ENCODE measurements at regions of chr5 and their contacts with region 1.

Region 1: DNA sequence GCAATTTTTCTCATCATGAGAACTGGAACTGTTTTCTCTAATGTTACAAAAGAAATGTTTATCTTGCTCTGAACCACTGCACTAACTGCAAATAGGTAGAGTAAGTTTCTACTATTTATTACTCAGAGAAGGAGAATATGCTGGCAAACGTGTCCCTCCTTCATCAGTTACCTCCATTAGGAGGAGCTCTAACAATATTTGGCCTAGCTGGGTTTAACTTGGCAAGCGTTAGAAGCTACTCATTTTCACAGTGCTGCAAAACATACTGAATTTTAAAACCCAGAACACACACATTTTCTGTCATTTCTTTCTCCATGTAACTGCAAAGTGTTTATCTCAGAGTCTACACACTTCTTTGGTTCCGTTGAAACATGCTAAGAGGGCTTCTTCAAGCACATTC is 101.0 kb upstream of the GABRG2 start:
- DNase-seq: peak in 1 of 2 experiments; percentile 11
- H3K4me3 ChIP-seq: no peak overlapping the region
- H3K4me3 Mint-ChIP-seq: no peak overlapping the region
- H3K27ac Mint-ChIP-seq: no peak overlapping the region
- H3K4me1 ChIP-seq: no peaks in the 10 kb centered on the region
- H3K4me1 Mint-ChIP-seq: no peaks in the 10 kb centered on the region
- H3K27me3 ChIP-seq: no peaks in the 10 kb centered on the region
- H3K27me3 Mint-ChIP-seq: no peaks in the 10 kb centered on the region
- CTCF ChIP-seq: peak; percentile 21 to 59

Region 2: DNA sequence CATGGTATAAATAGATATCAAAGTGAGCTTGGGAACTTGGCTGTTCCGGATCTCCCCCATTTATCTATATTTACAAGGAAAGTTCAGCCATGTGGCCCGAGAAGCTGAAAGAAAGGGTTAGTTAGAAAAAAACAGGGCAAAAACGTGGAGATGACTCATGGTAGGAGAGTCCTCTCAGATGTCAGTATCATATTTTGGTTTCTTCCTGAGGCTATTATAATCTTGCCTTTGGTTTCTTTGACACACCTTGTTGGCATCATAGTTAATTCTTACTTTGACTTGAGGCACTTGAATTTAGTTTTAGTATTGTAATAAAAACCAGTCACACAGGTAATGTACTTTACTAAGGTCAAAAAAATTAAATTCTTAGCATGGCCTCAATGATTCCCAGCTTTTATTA is 221.2 kb before region 1 on chr5:
- CTCF ChIA-PET with region 1: no interaction called
- POLR2A ChIA-PET with region 1: no interaction called
- intact Hi-C with region 1: no loop called
- DNase-seq: no peak
- H3K4me3 ChIP-seq: no peak overlapping the region
- H3K4me3 Mint-ChIP-seq: no peak overlapping the region
- H3K27ac Mint-ChIP-seq: no peak overlapping the region
- H3K4me1 ChIP-seq: no peaks in the 10 kb centered on the region
- H3K4me1 Mint-ChIP-seq: no peaks in the 10 kb centered on the region
- H3K27me3 ChIP-seq: no peaks in the 10 kb centered on the region
- H3K27me3 Mint-ChIP-seq: no peaks in the 10 kb centered on the region
- CTCF ChIP-seq: no peak

Region 3: GRCh38 chr5:161925960-161926359 is 40.6 kb before region 1 on chr5:
- CTCF ChIA-PET with region 1: no interaction called
- POLR2A ChIA-PET with region 1: no interaction called
- intact Hi-C with region 1: no loop called
- DNase-seq: peak in 1 of 2 experiments; percentile 1
- H3K4me3 ChIP-seq: no peak overlapping the region
- H3K4me3 Mint-ChIP-seq: no peak overlapping the region
- H3K27ac Mint-ChIP-seq: no peak overlapping the region
- H3K4me1 ChIP-seq: no peaks in the 10 kb centered on the region
- H3K4me1 Mint-ChIP-seq: no peaks in the 10 kb centered on the region
- H3K27me3 ChIP-seq: no peaks in the 10 kb centered on the region
- H3K27me3 Mint-ChIP-seq: peaks cover 6% of the 10 kb centered on the region
- CTCF ChIP-seq: no peak

Region 4: GRCh38 chr5:161988077-161988476 is 21.5 kb after region 1 on chr5:
- CTCF ChIA-PET with region 1: no interaction called
- POLR2A ChIA-PET with region 1: no interaction called
- intact Hi-C with region 1: no loop called
- DNase-seq: no peak
- H3K4me3 ChIP-seq: no peak overlapping the region
- H3K4me3 Mint-ChIP-seq: no peak overlapping the region
- H3K27ac Mint-ChIP-seq: no peak overlapping the region
- H3K4me1 ChIP-seq: no peaks in the 10 kb centered on the region
- H3K4me1 Mint-ChIP-seq: no peaks in the 10 kb centered on the region
- H3K27me3 ChIP-seq: no peaks in the 10 kb centered on the region
- H3K27me3 Mint-ChIP-seq: no peaks in the 10 kb centered on the region
- CTCF ChIP-seq: no peak

Region 5: GRCh38 chr5:162096448-162096847 is 129.9 kb after region 1 on chr5:
- CTCF ChIA-PET with region 1: interaction called, 3 read pairs
- POLR2A ChIA-PET with region 1: no interaction called
- intact Hi-C with region 1: loop called (anchors 10 kb)
- DNase-seq: peak in 1 of 2 experiments; percentile 4
- H3K4me3 ChIP-seq: no peak overlapping the region
- H3K4me3 Mint-ChIP-seq: no peak overlapping the region
- H3K27ac Mint-ChIP-seq: no peak overlapping the region
- H3K4me1 ChIP-seq: no peaks in the 10 kb centered on the region
- H3K4me1 Mint-ChIP-seq: no peaks in the 10 kb centered on the region
- H3K27me3 ChIP-seq: no peaks in the 10 kb centered on the region
- H3K27me3 Mint-ChIP-seq: peaks cover 2% of the 10 kb centered on the region
- CTCF ChIP-seq: no peak

Region 6: GRCh38 chr5:162288647-162289296 is 322.2 kb after region 1 on chr5:
- CTCF ChIA-PET with region 1: no interaction called
- POLR2A ChIA-PET with region 1: no interaction called
- intact Hi-C with region 1: no loop called
- DNase-seq: no peak
- H3K4me3 ChIP-seq: no peak overlapping the region
- H3K4me3 Mint-ChIP-seq: no peak overlapping the region
- H3K27ac Mint-ChIP-seq: no peak overlapping the region
- H3K4me1 ChIP-seq: no peaks in the 10 kb centered on the region
- H3K4me1 Mint-ChIP-seq: no peaks in the 10 kb centered on the region
- H3K27me3 ChIP-seq: no peaks in the 10 kb centered on the region
- H3K27me3 Mint-ChIP-seq: no peaks in the 10 kb centered on the region
- CTCF ChIP-seq: no peak

Measured in Caco-2 (cell line).